ENCODE measurements at regions of chr12 and their contacts with region 1.

Region 1: DNA sequence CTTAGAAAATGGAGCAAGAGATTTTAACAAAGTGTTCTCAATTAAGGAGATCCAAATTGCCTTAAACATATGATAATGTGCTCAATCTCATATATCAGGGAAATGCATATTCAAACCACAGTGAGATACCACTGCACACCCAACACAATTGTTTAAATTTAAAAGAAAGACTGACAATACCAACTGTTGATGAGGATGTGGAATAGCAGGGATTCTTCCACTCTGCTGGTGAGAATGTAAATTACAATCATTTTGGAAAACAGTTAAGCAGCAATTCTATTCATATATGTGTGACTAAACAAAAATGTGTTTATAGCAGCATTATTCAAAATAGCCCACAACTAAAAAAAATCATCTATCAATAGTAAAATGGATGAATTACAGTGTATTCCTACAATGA is 144.2 kb downstream of the KICS2 start:
- DNase-seq: no peak
- ATAC-seq: no peak
- H3K4me3 ChIP-seq: no peak overlapping the region
- H3K27ac ChIP-seq: no peak overlapping the region
- H3K4me1 ChIP-seq: no peaks in the 10 kb centered on the region
- H3K27me3 ChIP-seq: no peaks in the 10 kb centered on the region
- CTCF ChIP-seq: peak in 1 of 3 experiments; percentile 18; a peak in 1 of 6 replicates
- EP300 ChIP-seq: no peak
- POLR2A ChIP-seq: no peak
- RAD21 ChIP-seq: no peak

Region 2: DNA sequence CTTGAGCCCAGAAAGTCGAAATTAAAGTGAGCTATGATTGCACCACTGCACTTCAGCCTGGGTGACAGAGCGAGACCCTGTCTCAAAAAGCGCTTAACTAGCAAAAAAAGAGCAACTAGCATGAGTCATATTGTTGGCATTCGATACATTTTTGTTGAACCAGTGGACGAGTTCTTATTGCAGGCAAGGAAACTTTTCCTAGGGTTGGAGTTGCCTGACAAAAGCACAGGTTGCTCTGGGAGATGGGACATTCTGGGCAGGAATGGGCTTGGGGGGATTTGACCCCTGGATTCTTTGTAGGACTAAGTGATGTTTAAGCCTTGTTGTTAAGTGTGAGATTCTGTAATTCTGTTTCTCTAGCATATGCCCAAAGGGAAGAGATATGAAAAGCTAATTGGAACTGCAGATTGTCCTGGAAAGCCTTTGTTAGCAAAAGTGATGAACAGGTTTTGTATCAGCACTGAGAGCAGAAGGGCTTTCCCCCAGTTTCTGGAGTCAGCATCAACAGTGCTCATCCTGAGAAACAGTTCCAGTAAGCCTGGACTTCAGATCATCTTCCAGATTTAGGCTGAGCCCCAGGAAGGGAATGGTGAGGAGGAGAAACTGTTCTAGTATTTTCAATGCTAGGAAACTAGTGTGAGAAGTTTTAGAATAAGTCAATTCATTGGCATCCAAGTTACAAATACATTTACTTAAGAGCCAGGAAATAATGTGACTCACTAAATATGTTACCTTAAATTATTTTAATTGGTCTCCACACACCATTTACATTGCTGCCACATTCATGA is 110.4 kb before region 1 on chr12:
- CTCF ChIA-PET with region 1: no interaction called
- POLR2A ChIA-PET with region 1: no interaction called
- in situ Hi-C with region 1: no loop called
- intact Hi-C with region 1: no loop called
- DNase-seq: no peak
- ATAC-seq: no peak
- H3K4me3 ChIP-seq: no peak overlapping the region
- H3K27ac ChIP-seq: no peak overlapping the region
- H3K4me1 ChIP-seq: no peaks in the 10 kb centered on the region
- H3K27me3 ChIP-seq: peaks cover 0 to 7% of the 10 kb centered on the region in 2 experiments; a peak in 1 of 5 replicates
- CTCF ChIP-seq: no peak
- EP300 ChIP-seq: no peak
- POLR2A ChIP-seq: no peak
- RAD21 ChIP-seq: no peak

Region 3: GRCh38 chr12:64029013-64029857 is 48.7 kb before region 1 on chr12:
- CTCF ChIA-PET with region 1: no interaction called
- POLR2A ChIA-PET with region 1: no interaction called
- in situ Hi-C with region 1: no loop called
- intact Hi-C with region 1: no loop called
- DNase-seq: no peak
- ATAC-seq: no peak
- H3K4me3 ChIP-seq: no peak overlapping the region
- H3K27ac ChIP-seq: no peak overlapping the region
- H3K4me1 ChIP-seq: no peaks in the 10 kb centered on the region
- H3K27me3 ChIP-seq: no peaks in the 10 kb centered on the region; a peak in 2 of 5 replicates
- CTCF ChIP-seq: no peak
- EP300 ChIP-seq: no peak
- POLR2A ChIP-seq: no peak
- RAD21 ChIP-seq: no peak

Region 4: DNA sequence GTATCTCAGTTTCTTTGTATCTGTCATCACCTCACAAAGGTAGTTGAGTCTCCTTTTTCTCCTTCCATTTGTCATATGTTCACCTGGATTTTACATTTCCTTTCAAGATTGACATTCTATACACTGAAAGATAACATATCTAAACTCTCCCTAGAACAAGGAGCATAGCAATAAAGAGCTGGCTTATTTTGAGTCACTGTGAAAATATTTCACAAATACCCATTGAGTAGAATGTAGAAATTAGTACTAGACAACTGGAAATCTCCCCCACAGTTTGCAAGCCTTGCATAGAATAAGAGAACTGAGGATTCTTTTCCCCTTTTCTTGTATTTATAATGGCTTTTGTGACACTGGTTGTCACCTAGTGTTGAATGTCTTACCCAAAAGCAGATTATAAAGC is 32.9 kb after region 1 on chr12:
- CTCF ChIA-PET with region 1: no interaction called
- POLR2A ChIA-PET with region 1: no interaction called
- in situ Hi-C with region 1: loop called (anchors 5 kb)
- intact Hi-C with region 1: no loop called
- DNase-seq: no peak
- ATAC-seq: no peak
- H3K4me3 ChIP-seq: no peak overlapping the region
- H3K27ac ChIP-seq: no peak overlapping the region
- H3K4me1 ChIP-seq: no peaks in the 10 kb centered on the region
- H3K27me3 ChIP-seq: no peaks in the 10 kb centered on the region; a peak in 1 of 5 replicates
- CTCF ChIP-seq: no peak
- EP300 ChIP-seq: no peak
- POLR2A ChIP-seq: no peak
- RAD21 ChIP-seq: no peak

Measured in K562 (cell line).